ENCODE measurements at regions of chr1 and their contacts with region 1.

Region 1: DNA sequence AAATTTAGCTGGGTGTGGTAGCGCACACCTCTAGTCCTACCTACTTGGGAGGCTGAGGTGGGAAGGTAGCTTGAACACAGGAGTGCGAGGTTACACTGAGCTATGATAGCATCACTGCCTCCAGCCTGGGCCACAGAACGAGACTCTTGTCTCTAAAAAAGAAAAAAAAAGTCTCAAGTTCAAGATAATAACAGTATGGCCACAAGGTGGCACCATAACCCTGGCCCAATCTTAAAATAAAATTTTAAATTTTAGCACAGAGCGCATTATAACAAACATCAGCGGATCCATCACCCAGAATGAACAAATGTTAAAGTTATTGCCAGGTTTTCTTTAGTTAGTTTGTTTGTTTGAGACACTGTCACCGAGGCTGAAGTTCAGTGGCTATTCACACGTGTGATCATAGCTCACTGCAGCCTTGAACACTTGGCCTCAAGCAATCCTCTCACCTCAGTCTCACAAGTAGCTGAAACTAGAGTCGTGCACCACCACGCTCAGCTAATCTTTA is 2.9 kb upstream of the HTR6 start:
- DNase-seq: no peak
- H3K4me3 ChIP-seq: no peak overlapping the region
- H3K27ac ChIP-seq: no peak overlapping the region
- H3K4me1 ChIP-seq: peaks cover 0 to 24% (median 21%) of the 10 kb centered on the region in 4 donors
- H3K27me3 ChIP-seq: peaks cover 22 to 46% (median 30%) of the 10 kb centered on the region in 3 donors
- CTCF ChIP-seq: peak; percentile 34 to 67 (median 35)
- EP300 ChIP-seq: no peak
- POLR2A ChIP-seq: no peak

Region 2: GRCh38 chr1:19361611-19362147 is 300.1 kb before region 1 on chr1:
- intact Hi-C with region 1: no loop called
- DNase-seq: no peak
- H3K4me3 ChIP-seq: no peak overlapping the region
- H3K27ac ChIP-seq: peak overlapping the region in 1 of 4 donors; percentile 50
- H3K4me1 ChIP-seq: peaks cover 0 to 43% (median 36%) of the 10 kb centered on the region in 4 donors
- H3K27me3 ChIP-seq: no peaks in the 10 kb centered on the region
- CTCF ChIP-seq: no peak
- EP300 ChIP-seq: no peak
- POLR2A ChIP-seq: no peak

Region 3: DNA sequence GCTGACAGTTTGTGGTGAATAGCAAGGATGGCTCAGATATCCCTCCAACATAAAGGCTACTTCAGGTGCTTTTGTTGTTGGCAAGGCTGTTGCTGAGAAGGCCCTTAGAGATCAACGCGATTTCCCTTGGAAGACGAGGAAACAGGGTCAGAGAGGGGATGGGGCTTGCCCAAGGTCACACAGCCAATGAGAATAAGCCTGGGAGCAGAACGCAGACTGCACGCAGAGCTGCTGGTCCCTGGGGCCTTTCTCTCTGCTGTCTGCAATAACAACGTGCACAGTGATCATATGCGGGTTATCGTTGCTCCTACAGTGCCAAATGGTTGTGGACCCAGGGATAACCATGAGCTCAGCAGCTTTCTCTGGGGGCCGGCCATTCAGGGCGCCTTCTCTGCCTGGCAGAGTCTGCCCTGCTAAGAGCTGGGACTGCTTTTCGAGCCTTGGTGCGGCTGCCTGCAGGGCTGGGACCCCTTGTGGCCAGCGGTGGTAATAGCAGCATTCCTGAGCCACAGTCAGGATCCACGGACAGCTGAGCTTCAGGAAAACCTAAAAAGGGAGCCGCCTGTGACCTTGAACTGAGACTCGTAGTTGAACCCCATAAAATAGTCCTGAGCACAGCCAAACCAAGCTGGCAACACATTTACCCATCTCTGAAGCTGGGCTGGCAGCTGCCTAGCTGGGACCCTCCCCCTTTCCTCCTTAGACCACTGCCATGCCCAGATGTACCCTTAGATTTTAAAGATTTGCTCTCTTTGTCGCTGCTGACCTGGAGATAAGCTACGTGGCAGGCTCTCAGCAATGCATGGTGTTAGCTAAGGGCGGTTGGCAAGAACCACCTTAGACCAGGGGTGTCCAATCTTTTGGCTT is 42.7 kb after region 1 on chr1:
- intact Hi-C with region 1: loop called (anchors 2 kb)
- DNase-seq: peak; percentile 80
- H3K4me3 ChIP-seq: no peak overlapping the region
- H3K27ac ChIP-seq: no peak overlapping the region
- H3K4me1 ChIP-seq: peaks cover 0 to 8% (median 7%) of the 10 kb centered on the region in 4 donors
- H3K27me3 ChIP-seq: no peaks in the 10 kb centered on the region
- CTCF ChIP-seq: peak; percentile 71 to 93 (median 86)
- EP300 ChIP-seq: no peak
- POLR2A ChIP-seq: no peak